Activated CD4-positive, alpha-beta T cell treated with anti-CD3 and anti-CD28 coated beads for 36 hours (primary cell): ENCODE measurements at regions of chr12 and their contacts with region 1.

Region 1: GRCh38 chr12:103877934-103878510 is 37.0 kb upstream of the NT5DC3 start:
- DNase-seq: peak; percentile 75
- ATAC-seq: peak; percentile 85
- H3K4me3 Mint-ChIP-seq: no peak overlapping the region
- H3K27ac Mint-ChIP-seq: no peak overlapping the region
- H3K4me1 Mint-ChIP-seq: peaks cover 21% of the 10 kb centered on the region
- H3K27me3 Mint-ChIP-seq: no peaks in the 10 kb centered on the region

Region 2: DNA sequence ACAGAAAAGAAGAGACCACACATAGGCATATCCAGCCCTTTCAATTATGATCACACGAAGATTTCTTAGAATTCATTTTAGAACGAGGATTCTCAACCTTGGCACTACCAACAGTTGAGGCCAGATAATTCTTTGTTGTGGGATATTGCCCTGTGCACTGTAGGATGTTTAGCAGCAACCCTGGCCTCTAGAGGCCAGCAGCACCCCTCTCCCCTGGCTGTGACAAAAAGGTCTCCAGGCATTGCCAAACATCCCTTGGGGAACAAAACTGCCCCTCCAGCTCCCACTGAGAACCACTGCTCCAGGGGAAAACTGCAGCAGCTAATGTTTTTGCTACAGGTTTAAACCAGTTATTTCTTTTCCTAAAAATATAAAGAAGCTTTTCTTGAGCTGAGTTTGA is 44.1 kb before region 1 on chr12:
- CTCF ChIA-PET with region 1: no interaction called
- POLR2A ChIA-PET with region 1: no interaction called
- intact Hi-C with region 1: no loop called
- DNase-seq: no peak
- ATAC-seq: no peak
- H3K4me3 Mint-ChIP-seq: no peak overlapping the region
- H3K27ac Mint-ChIP-seq: no peak overlapping the region
- H3K4me1 Mint-ChIP-seq: peaks cover 16% of the 10 kb centered on the region
- H3K27me3 Mint-ChIP-seq: no peaks in the 10 kb centered on the region

Region 3: GRCh38 chr12:103956516-103957027 is 78.5 kb after region 1 on chr12:
- CTCF ChIA-PET with region 1: no interaction called
- POLR2A ChIA-PET with region 1: no interaction called
- intact Hi-C with region 1: loop called in 1 of 2 experiments (anchors 1 kb)
- DNase-seq: no peak
- ATAC-seq: peak; percentile 0
- H3K4me3 Mint-ChIP-seq: peak overlapping the region; percentile 95
- H3K27ac Mint-ChIP-seq: peak overlapping the region; percentile 94
- H3K4me1 Mint-ChIP-seq: peaks cover 45% of the 10 kb centered on the region
- H3K27me3 Mint-ChIP-seq: no peaks in the 10 kb centered on the region